Cardiac septum (tissue), 1 donor: ENCODE measurements at regions of chr1 and their contacts with region 1.

Region 1: GRCh38 chr1:180845352-180845751 is 67.3 kb upstream of the KIAA1614 start:
- DNase-seq: no peak

Region 2: DNA sequence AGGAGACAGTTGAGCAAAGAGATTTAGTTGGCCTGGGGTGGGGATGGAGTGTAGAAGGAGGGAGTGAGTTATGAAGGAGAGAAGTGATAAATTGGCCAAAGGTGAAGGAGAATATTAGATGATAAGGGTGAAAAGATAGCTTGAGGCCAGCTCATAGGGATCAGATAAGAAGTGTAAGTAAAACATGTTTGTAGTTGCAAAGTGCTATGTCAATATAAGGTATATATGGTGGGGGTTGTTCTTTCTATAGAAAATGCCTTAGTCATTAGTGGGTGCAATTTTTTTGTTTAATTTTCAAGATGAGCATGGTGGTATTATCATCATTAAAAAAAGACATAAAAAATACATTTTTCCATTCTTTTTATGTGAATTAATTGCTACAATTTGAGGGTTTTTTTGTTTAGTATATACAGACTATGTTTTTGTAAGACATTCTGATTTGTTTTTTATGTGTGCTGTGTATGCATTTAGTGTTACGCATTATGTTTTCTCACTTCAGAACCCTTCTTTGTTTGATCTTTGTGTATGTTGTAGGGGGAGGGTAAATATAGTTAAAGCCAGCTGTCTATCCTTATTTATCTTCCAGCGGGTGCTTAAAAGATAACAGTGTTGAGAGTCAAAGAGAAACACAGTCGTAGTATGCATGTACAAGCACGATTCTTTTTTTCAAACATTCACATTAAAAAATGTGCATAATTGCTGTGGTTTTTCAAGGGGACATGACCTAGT is 30.3 kb before region 1 on chr1:
- intact Hi-C with region 1: no loop called
- DNase-seq: no peak

Region 3: GRCh38 chr1:180887841-180888240 is 42.5 kb after region 1 on chr1:
- intact Hi-C with region 1: loop called (anchors 2 kb)
- DNase-seq: no peak